ENCODE measurements at regions of chr1 and their contacts with region 1.

Region 1: GRCh38 chr1:201042779-201043461 is 19.4 kb upstream of the KIF21B start:
- DNase-seq: peak; percentile 54 to 91 (median 80)

Region 2: DNA sequence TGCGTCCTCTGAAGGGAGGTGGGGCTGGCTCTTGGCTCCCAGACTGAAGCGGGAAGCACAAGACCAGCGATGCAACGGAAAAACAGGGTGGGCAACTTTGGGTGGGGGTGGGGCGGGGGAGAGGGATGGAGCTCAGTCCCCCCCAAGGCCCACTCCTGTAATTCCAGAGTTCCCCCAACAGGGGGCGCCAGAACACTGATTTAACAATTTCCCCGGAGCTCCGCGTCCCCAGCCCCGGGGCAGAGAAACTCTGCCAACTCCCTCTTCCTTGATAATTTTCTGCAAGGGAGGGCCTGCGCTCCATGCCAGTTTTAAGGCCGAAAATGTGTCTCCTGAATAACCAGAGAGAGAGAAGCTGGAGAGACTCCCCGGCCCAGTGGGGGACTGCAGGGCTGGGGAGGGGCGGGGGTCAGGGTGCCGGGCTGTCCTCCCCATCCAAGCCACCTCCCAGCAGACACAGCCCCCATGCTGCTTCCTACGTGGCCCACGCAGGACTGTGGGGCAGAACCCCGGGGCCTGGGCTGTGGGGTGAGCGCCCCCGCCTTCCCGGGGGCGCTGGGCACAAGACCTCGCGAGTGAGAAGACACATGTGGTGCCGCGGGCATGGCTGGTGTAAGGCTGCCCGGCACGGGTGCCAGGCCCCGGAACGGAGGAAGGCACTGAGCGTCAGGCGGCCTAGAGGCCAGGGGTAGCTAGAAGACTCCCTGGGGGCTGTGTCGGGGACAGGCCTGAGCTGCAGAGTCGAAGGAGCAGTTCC is 70.8 kb before region 1 on chr1:
- intact Hi-C with region 1: loop called (anchors 2 kb)
- DNase-seq: peak; percentile 59 to 89 (median 76)